Caco-2 (cell line): ENCODE measurements at regions of chr11 and their contacts with region 1.

Region 1: GRCh38 chr11:62560566-62561103 is 13.1 kb downstream of the EEF1G start:
- DNase-seq: peak; percentile 97 to 98
- H3K4me3 ChIP-seq: no peak overlapping the region
- H3K4me3 Mint-ChIP-seq: peak overlapping the region; percentile 50
- H3K27ac Mint-ChIP-seq: peak overlapping the region; percentile 71
- H3K4me1 ChIP-seq: peaks cover 74% of the 10 kb centered on the region
- H3K4me1 Mint-ChIP-seq: peaks cover 59% of the 10 kb centered on the region
- H3K27me3 ChIP-seq: no peaks in the 10 kb centered on the region
- H3K27me3 Mint-ChIP-seq: no peaks in the 10 kb centered on the region
- CTCF ChIP-seq: peak; percentile 91 to 94

Region 2: DNA sequence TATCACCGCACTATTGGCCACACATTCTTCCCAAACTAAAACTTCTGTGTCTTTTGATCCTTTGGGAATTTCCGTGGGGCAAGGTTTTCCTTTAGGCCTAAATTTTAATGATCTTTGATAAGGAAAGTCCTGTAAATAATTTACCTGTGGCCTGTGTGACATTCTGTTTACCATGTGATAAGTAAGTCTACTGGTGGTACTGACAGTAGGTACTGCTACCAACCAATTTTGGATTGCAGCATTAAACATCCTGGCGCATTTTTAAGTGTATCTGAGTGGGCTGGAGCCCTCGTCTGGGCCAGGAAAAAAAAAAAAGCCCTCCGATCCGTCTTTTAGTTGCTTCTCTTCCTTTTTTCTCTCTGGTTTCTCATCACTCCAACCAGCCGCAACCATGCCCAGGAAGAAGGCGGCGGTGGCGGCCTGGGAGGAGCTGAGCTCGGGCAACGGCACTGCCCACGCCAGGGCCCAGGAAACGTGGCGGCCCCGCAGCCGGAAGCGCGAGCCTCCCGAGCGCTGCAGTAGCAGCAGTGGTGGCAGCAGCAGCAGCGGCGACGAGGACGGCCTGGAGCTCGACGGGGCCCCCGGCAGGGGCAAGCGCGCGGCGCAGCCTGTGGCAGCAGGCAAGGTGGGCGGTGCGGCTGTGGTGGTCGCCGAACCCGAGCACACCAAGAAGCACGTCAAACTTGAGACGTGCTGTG is 189.7 kb before region 1 on chr11:
- CTCF ChIA-PET with region 1: no interaction called
- POLR2A ChIA-PET with region 1: no interaction called
- intact Hi-C with region 1: no loop called
- DNase-seq: no peak
- H3K4me3 ChIP-seq: no peak overlapping the region
- H3K4me3 Mint-ChIP-seq: peak overlapping the region; percentile 50
- H3K27ac Mint-ChIP-seq: no peak overlapping the region
- H3K4me1 ChIP-seq: peaks cover 36% of the 10 kb centered on the region
- H3K4me1 Mint-ChIP-seq: peaks cover 37% of the 10 kb centered on the region
- H3K27me3 ChIP-seq: no peaks in the 10 kb centered on the region
- H3K27me3 Mint-ChIP-seq: no peaks in the 10 kb centered on the region
- CTCF ChIP-seq: no peak

Region 3: GRCh38 chr11:62383822-62384221 is 176.8 kb before region 1 on chr11:
- CTCF ChIA-PET with region 1: interaction called, 5 read pairs
- POLR2A ChIA-PET with region 1: no interaction called
- intact Hi-C with region 1: loop called (anchors 1 kb)
- DNase-seq: no peak
- H3K4me3 ChIP-seq: no peak overlapping the region
- H3K4me3 Mint-ChIP-seq: no peak overlapping the region
- H3K27ac Mint-ChIP-seq: no peak overlapping the region
- H3K4me1 ChIP-seq: peaks cover 24% of the 10 kb centered on the region
- H3K4me1 Mint-ChIP-seq: peaks cover 21% of the 10 kb centered on the region
- H3K27me3 ChIP-seq: no peaks in the 10 kb centered on the region
- H3K27me3 Mint-ChIP-seq: no peaks in the 10 kb centered on the region
- CTCF ChIP-seq: no peak

Region 4: DNA sequence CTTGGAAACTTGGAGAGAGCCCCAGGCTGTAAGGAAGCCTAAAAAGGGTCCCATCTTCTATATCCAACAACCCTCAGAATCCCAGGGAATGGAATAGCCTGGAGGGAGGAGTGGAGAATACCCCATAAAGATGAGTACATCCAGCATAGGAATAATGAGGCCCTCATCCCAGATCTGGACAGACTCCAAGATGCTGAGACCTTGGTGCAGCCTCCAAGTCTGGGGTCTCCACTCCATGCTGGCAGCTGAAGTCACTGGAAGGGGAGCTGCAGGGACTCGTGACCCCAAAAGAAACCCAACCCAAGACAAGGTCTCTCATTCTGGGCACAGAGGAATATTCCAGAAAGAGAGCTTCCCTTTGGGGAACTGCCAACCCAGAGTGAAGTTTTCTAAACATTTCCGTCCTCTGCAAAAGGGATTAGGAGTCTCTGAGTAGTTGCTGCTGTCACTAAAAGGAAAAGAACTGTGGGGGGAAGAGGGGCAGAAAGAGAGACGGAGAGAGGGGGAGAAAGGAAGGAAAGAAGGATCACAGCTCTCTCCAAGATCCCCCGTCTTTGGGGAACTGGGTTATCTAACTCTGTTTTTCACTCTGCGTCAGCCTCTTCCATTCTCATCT is 141.2 kb before region 1 on chr11:
- CTCF ChIA-PET with region 1: interaction called, 38 read pairs
- POLR2A ChIA-PET with region 1: no interaction called
- intact Hi-C with region 1: loop called (anchors 1 kb)
- DNase-seq: no peak
- H3K4me3 ChIP-seq: no peak overlapping the region
- H3K4me3 Mint-ChIP-seq: no peak overlapping the region
- H3K27ac Mint-ChIP-seq: no peak overlapping the region
- H3K4me1 ChIP-seq: peaks cover 24% of the 10 kb centered on the region
- H3K4me1 Mint-ChIP-seq: peaks cover 30% of the 10 kb centered on the region
- H3K27me3 ChIP-seq: no peaks in the 10 kb centered on the region
- H3K27me3 Mint-ChIP-seq: no peaks in the 10 kb centered on the region
- CTCF ChIP-seq: no peak

Region 5: DNA sequence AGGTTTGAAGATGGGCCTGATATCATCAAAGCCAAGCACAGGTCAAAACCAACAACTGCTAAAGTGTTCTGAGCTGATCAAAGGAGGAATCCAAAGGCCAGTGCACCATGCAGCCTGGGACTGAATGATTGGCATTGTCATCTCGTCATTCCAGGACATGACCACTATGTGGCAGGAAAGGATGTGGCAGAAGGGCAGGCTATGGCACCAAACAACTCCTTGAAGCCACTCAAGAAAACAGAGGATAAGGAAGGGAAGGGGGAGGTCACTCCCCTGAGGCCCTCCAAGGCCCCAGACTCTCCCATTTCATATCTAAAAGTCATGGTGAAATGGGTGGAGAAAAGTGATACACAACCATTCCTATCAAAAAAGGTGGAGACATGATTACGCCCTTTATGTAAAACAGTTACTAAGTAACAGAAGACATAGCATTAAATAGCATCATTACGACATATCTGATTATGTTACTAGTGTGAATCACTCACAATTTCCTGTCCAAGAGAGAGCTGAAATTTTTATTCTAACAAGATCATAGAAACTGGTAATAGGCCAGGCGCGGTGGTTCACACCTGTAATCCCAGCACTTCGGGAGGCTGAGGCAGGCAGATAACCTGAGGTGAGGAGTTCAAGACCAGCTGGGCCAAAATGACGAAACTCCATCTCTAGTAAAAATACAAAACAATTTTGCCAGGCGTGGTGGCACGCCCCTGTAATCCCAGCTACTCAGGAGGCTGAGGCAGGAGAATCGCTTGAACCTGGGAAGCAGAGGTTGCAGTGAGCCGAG is 63.3 kb before region 1 on chr11:
- CTCF ChIA-PET with region 1: interaction called, 11 read pairs
- POLR2A ChIA-PET with region 1: no interaction called
- intact Hi-C with region 1: loop called (anchors 1 kb)
- DNase-seq: peak; percentile 75 to 82
- H3K4me3 ChIP-seq: no peak overlapping the region
- H3K4me3 Mint-ChIP-seq: no peak overlapping the region
- H3K27ac Mint-ChIP-seq: peak overlapping the region; percentile 76
- H3K4me1 ChIP-seq: peaks cover 48% of the 10 kb centered on the region
- H3K4me1 Mint-ChIP-seq: peaks cover 33% of the 10 kb centered on the region
- H3K27me3 ChIP-seq: no peaks in the 10 kb centered on the region
- H3K27me3 Mint-ChIP-seq: no peaks in the 10 kb centered on the region
- CTCF ChIP-seq: peak; percentile 59 to 68

Region 6: GRCh38 chr11:62508268-62509058 is 52.2 kb before region 1 on chr11:
- CTCF ChIA-PET with region 1: interaction called, 12 read pairs
- POLR2A ChIA-PET with region 1: interaction called, 4 read pairs
- intact Hi-C with region 1: no loop called
- DNase-seq: peak; percentile 79 to 83
- H3K4me3 ChIP-seq: 0 out of 2 replicates have a peak overlapping the region, but pooled peaks have one; percentile 5
- H3K4me3 Mint-ChIP-seq: peak overlapping the region; percentile 58
- H3K27ac Mint-ChIP-seq: peak overlapping the region; percentile 85
- H3K4me1 ChIP-seq: peaks cover 56% of the 10 kb centered on the region
- H3K4me1 Mint-ChIP-seq: peaks cover 36% of the 10 kb centered on the region
- H3K27me3 ChIP-seq: no peaks in the 10 kb centered on the region
- H3K27me3 Mint-ChIP-seq: no peaks in the 10 kb centered on the region
- CTCF ChIP-seq: peak; percentile 41 to 74

Region 7: DNA sequence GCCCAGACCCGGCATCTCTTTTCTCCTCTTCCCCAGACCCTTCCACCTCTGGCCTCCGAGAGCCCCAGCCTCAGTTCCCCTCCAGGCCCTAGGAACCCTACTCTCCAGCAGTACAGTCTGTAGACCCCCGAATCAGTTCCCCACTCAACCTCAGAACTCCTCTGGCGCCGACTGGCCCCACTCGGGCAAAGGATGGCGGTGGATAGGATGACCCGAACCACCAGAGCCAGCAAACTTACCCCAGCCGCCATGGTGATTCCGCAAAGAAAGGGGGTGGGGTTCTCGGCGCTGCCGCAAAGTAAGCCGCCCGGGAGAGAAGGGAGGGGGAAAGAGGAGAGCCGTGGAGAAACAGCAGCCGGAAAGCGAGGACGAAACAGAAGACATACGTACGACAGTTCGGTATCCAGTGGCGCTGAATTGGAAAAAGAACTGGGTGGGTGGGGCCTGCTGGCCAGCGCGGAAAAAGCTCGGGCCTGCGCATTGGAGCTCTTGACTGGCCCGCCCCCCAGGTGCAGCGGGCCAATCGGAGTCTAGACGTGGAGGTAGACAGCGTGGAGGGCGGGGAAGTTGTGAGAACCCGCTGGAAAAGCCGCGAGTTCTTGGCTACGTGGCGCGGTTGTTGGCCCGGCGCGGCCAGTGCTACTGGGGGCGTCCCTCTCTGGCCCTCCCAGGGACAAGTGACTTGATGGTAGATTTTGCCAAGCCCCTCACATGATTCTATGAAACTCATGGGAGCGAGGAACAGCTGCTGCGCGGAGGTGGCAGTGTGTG is 13.1 kb after region 1 on chr11 and contains the start of gene EEF1G:
- CTCF ChIA-PET with region 1: interaction called, 28 read pairs
- POLR2A ChIA-PET with region 1: interaction called, 26 read pairs
- intact Hi-C with region 1: no loop called
- DNase-seq: peak; percentile 100
- H3K4me3 ChIP-seq: peak within 1 kb of the TSS; percentile 62
- H3K4me3 Mint-ChIP-seq: peak within 1 kb of the TSS; percentile 97
- H3K27ac Mint-ChIP-seq: peak within 1 kb of the TSS; percentile 100
- H3K4me1 ChIP-seq: peaks cover 25% of the 10 kb centered on the region
- H3K4me1 Mint-ChIP-seq: peaks cover 56% of the 10 kb centered on the region
- H3K27me3 ChIP-seq: no peaks in the 10 kb centered on the region
- H3K27me3 Mint-ChIP-seq: no peaks in the 10 kb centered on the region
- CTCF ChIP-seq: no peak
- total RNA-seq, gene EEF1G: 2,004 and 2,035 TPM in 2 replicates

Region 8: DNA sequence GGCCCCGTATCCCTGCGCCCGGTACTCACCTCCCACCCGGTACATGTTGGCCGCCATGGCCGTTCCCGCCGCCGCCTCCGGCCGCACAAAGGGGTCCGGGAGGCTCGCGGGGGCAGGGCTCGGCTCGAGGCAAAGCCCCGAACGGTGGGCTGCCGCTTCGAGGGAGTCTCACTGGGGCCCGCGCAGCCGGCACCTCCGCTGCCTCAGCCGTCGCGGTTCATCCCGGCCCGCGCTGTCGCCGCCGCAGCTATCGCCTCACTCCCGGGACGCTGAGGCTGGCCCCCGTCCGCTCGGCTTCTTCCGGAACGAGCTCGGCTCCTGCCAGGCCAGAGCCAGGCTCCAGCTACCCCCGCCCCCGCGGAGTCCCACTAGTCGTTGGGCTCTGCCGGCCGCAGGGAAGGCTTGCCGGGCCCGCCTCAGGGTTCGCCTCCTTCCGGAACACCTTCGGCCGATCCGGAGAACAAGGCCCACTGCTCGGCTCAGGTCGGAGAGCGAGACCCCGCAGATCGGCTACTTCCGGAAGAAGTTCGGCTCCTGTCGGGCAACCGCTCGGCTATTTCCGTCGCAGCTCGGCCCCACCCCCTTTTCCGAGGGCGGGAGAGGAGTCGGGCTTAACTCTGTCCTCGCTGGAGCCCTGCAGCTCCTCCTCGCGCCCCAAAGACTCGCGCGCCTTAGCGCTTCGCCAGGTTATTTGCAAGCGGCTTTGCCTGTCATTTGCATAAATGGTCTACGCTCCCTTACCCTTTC is 40.9 kb after region 1 on chr11 and contains the start of gene MTA2:
- CTCF ChIA-PET with region 1: interaction called, 8 read pairs
- POLR2A ChIA-PET with region 1: interaction called, 3 read pairs
- intact Hi-C with region 1: loop called (anchors 2 kb)
- DNase-seq: peak; percentile 99 to 100
- H3K4me3 ChIP-seq: peak within 1 kb of the TSS; percentile 97
- H3K4me3 Mint-ChIP-seq: peak within 1 kb of the TSS; percentile 88
- H3K27ac Mint-ChIP-seq: peak within 1 kb of the TSS; percentile 89
- H3K4me1 ChIP-seq: peaks cover 35% of the 10 kb centered on the region
- H3K4me1 Mint-ChIP-seq: peaks cover 36% of the 10 kb centered on the region
- H3K27me3 ChIP-seq: no peaks in the 10 kb centered on the region
- H3K27me3 Mint-ChIP-seq: no peaks in the 10 kb centered on the region
- CTCF ChIP-seq: no peak
- total RNA-seq, gene MTA2: 134 and 135 TPM in 2 replicates